Activated CD4-positive, alpha-beta T cell treated with anti-CD3 and anti-CD28 coated beads, Interleukin-2, amount 10 ng/mL, durations not matched to agents 24 days and 14 days (primary cell): ENCODE measurements at regions of chr7 and their contacts with region 1.

Region 1: DNA sequence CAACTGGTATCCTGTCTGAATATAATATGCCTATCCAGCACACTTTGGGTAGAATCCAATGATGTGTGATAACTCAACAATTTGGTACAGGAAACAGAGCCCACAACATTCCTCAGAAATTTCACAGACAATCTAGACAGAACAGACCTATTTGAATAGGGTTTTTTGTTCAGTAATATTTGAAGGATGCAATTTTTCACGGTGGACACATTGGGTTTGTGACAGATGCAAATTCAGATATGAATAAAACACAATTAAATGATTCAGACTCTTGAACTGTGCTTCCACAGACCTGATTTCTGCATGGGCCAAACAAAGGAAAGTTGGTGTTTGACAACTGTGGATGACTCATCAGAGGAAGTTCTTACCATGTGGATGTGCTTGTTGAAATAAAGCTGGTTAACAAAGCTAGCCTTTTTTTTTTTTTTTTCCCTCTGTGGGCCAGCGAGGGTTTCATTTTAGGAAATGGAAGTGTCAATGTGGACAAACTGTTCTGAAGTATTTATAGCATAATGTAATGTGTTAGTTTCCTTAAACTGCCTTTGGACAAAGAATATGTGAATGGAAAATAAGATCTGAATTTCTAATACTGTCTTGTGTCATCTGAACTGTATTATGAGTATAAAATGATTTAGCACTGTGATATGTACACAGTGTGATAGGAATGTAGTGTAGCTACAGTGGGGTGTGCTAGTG is 43.2 kb upstream of the FAM133B start:
- DNase-seq: peak; percentile 84
- H3K4me3 Mint-ChIP-seq: peak overlapping the region; percentile 65
- H3K27ac Mint-ChIP-seq: peak overlapping the region; percentile 97
- H3K4me1 Mint-ChIP-seq: peaks cover 64% of the 10 kb centered on the region
- H3K27me3 Mint-ChIP-seq: no peaks in the 10 kb centered on the region

Region 2: DNA sequence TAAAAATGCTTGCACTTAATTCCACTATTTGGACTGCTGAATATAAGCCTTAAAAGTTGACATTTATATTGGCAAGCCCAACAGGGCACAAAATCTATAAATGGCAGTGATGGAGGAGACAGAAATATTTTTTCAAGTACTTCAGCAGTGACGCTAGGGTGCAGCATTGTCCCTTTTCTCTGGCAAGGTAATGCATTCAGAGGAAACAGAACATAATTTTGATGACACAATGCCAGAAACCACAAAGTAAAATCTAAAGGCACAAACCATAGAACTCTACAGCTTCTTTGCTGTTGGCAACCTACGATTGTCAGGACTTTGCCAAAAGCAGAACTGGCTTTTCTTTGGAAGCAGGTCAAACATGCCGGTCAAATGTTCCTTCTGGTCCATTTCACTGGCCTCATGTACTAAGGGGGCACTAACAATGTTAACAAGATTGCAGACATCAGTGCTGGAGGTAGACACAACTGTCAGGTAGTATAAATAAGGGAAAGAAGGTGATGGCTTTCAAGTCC is 12.3 kb before region 1 on chr7:
- intact Hi-C with region 1: loop called (anchors 1 kb)
- DNase-seq: peak; percentile 93
- H3K4me3 Mint-ChIP-seq: peak overlapping the region; percentile 71
- H3K27ac Mint-ChIP-seq: peak overlapping the region; percentile 95
- H3K4me1 Mint-ChIP-seq: peaks cover 46% of the 10 kb centered on the region
- H3K27me3 Mint-ChIP-seq: no peaks in the 10 kb centered on the region

Region 3: DNA sequence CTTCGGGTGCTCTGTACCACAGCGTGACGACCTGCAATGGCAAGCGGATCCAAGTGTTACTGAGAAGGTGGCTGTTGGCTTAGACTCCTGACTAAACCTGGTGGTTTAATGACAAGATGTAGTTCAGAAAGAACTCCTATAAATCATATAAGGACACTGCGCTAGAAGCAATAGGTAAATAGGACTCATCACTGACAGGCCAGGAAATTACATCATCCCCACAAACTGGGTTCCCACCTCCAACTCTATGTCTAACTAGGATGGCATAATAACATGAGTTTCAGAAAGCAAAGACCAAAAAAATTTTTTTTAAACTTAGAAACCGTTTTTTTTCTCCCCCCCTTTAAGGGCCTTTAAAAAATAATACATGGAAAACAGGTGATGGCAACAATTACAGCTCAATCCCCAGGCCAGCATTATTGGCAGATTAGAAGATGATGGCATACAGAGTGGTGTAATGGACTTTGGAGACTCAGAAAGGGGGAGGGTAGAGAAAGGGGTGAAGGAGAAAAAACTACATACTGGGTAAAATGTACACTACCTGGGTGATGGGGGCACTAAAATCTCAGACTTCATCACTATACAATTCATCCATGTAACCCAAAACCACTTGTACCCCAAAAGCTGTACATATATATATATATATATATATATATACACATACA is 38.3 kb after region 1 on chr7:
- intact Hi-C with region 1: no loop called
- DNase-seq: no peak
- H3K4me3 Mint-ChIP-seq: peak overlapping the region; percentile 34
- H3K27ac Mint-ChIP-seq: peak overlapping the region; percentile 76
- H3K4me1 Mint-ChIP-seq: peaks cover 50% of the 10 kb centered on the region
- H3K27me3 Mint-ChIP-seq: no peaks in the 10 kb centered on the region

Region 4: DNA sequence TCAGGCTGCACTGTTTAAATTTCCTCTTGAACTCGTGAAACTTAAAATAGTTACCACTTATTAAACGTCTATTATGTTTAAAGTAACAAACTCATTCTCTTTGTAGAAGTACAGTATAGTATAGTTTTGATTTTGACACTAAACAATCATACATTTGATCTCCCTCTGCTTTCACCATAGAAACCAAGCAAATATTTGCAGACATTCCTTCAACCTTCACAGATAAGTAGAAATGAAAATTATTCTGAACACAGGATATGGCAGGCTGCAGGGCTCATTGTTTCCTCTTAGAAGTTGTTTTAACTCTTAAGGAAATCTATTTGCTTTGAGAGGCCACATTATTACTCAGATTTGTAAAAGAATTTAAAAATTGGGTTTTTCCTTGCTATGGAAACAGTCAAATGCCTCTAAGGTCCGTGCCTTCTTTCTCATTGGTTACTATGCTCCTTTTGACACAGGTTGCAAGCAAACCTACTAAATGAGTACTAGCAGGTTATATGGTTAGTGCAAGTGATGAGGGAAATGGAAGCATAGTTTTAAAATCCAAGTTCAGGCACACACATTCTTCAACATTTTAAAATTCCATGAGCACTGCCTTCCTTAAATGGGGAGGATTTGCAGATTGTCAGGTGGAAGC is 49.7 kb after region 1 on chr7:
- intact Hi-C with region 1: loop called (anchors 1 kb)
- DNase-seq: peak; percentile 75
- H3K4me3 Mint-ChIP-seq: peak overlapping the region; percentile 47
- H3K27ac Mint-ChIP-seq: peak overlapping the region; percentile 96
- H3K4me1 Mint-ChIP-seq: peaks cover 79% of the 10 kb centered on the region
- H3K27me3 Mint-ChIP-seq: no peaks in the 10 kb centered on the region

Region 5: DNA sequence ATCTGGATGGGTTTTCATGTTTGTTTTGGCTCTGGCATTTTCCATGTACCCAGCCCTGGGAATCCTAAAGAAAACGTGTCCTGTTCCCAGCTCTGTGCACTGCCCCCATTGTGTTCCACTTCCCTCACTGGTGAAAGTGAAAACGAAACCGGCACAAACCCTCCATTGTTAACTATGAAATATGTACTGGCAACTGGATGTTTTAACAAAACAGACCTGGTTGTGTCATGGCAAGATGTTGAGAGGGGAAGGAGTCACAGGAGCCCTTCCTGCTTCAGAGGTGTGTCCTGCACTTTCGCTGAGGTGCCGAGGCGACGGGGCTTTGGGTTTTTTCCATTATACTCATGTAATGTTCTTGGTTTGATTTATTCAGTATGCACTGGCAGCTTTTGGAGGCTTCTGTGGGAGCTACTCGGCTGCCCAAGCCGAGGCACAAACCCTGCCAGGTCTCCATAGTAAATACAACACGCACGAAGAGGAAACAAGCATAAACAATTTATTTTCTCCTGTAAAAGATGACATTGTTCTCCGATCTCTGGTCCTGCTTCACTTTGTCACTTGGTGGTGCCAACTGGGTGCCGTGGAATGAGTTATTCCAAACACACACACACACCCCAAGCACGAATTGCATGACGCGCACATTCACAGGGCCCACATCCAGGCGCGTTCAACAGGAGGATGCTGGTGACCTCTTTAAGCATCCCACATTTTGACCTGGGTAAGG is 84.8 kb after region 1 on chr7:
- intact Hi-C with region 1: loop called (anchors 1 kb)
- DNase-seq: peak; percentile 92
- H3K4me3 Mint-ChIP-seq: peak overlapping the region; percentile 73
- H3K27ac Mint-ChIP-seq: peak overlapping the region; percentile 97
- H3K4me1 Mint-ChIP-seq: peaks cover 52% of the 10 kb centered on the region
- H3K27me3 Mint-ChIP-seq: no peaks in the 10 kb centered on the region

Region 6: GRCh38 chr7:92768501-92769393 is 135.4 kb after region 1 on chr7:
- intact Hi-C with region 1: loop called (anchors 1 kb)
- DNase-seq: peak; percentile 66
- H3K4me3 Mint-ChIP-seq: peak overlapping the region; percentile 63
- H3K27ac Mint-ChIP-seq: peak overlapping the region; percentile 94
- H3K4me1 Mint-ChIP-seq: peaks cover 59% of the 10 kb centered on the region
- H3K27me3 Mint-ChIP-seq: no peaks in the 10 kb centered on the region

Region 7: GRCh38 chr7:92953657-92954056 is 320.3 kb after region 1 on chr7:
- intact Hi-C with region 1: loop called (anchors 5 kb)
- DNase-seq: no peak
- H3K4me3 Mint-ChIP-seq: no peak overlapping the region
- H3K27ac Mint-ChIP-seq: peak overlapping the region; percentile 78
- H3K4me1 Mint-ChIP-seq: peaks cover 14% of the 10 kb centered on the region
- H3K27me3 Mint-ChIP-seq: no peaks in the 10 kb centered on the region

Region 8: GRCh38 chr7:93117852-93118530 is 484.6 kb after region 1 on chr7 and contains the start of gene SAMD9:
- intact Hi-C with region 1: loop called (anchors 5 kb)
- DNase-seq: peak; percentile 90
- H3K4me3 Mint-ChIP-seq: peak within 1 kb of the TSS; percentile 90
- H3K27ac Mint-ChIP-seq: peak within 1 kb of the TSS; percentile 90
- H3K4me1 Mint-ChIP-seq: peaks cover 54% of the 10 kb centered on the region
- H3K27me3 Mint-ChIP-seq: no peaks in the 10 kb centered on the region
- total RNA-seq, gene SAMD9: 8.6 and 9.4 TPM in 2 replicates